ENCODE measurements at regions of chr20 and their contacts with region 1.

Region 1: DNA sequence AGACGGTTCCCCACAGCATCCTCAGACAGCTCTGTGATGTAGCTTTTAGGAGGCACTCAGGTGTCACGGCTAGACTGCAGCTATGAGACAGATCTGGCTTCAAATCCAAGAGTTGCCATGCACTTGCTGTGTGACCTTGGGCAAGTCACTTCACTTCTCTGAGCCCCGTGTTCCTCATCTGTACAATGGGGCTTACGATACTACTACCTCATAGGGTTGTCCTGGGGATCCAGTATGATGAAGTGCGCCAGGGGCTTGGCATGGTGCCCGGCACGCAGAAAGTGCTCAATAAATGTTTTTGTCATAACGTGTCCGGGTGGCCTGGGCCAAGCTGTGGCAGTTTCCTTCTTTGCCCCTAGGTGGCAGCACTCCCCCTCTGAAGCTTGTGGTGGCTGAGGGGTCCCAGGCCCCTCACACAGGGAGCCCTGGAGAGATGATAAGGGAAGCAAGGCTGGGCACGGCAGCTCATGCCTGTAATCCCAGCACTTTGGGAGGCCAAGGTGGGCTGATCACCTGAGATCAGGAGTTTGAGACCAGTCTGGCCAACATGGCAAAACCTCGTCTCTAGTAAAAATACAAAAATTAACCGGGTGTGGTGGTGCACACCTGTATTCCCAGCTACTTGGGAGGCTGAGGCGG is 19.1 kb upstream of the CHMP4B start:
- DNase-seq: peak; percentile 59 to 77 (median 74)
- ATAC-seq: peak; percentile 83
- H3K4me3 ChIP-seq: no peak overlapping the region
- H3K27ac ChIP-seq: no peak overlapping the region
- H3K4me1 ChIP-seq: peaks cover 8 to 19% of the 10 kb centered on the region in 2 experiments; a peak in 4 of 5 replicates
- H3K27me3 ChIP-seq: no peaks in the 10 kb centered on the region
- CTCF ChIP-seq: peak; percentile 72 to 86 (median 78)
- EP300 ChIP-seq: no peak
- POLR2A ChIP-seq: no peak
- RAD21 ChIP-seq: peak in 1 of 2 experiments; percentile 83

Region 2: GRCh38 chr20:33770005-33770404 is 22.1 kb before region 1 on chr20:
- CTCF ChIA-PET with region 1: no interaction called
- POLR2A ChIA-PET with region 1: no interaction called
- in situ Hi-C with region 1: no loop called
- intact Hi-C with region 1: no loop called
- DNase-seq: no peak
- ATAC-seq: 0 out of 3 replicates have a peak, but pooled peaks have one; percentile 38
- H3K4me3 ChIP-seq: no peak overlapping the region
- H3K27ac ChIP-seq: no peak overlapping the region
- H3K4me1 ChIP-seq: peaks cover 8 to 10% of the 10 kb centered on the region in 2 experiments; a peak in 4 of 5 replicates
- H3K27me3 ChIP-seq: no peaks in the 10 kb centered on the region
- CTCF ChIP-seq: peak in 1 of 3 experiments; percentile 11; a peak in 1 of 6 replicates
- EP300 ChIP-seq: no peak
- POLR2A ChIP-seq: no peak
- RAD21 ChIP-seq: no peak

Region 3: DNA sequence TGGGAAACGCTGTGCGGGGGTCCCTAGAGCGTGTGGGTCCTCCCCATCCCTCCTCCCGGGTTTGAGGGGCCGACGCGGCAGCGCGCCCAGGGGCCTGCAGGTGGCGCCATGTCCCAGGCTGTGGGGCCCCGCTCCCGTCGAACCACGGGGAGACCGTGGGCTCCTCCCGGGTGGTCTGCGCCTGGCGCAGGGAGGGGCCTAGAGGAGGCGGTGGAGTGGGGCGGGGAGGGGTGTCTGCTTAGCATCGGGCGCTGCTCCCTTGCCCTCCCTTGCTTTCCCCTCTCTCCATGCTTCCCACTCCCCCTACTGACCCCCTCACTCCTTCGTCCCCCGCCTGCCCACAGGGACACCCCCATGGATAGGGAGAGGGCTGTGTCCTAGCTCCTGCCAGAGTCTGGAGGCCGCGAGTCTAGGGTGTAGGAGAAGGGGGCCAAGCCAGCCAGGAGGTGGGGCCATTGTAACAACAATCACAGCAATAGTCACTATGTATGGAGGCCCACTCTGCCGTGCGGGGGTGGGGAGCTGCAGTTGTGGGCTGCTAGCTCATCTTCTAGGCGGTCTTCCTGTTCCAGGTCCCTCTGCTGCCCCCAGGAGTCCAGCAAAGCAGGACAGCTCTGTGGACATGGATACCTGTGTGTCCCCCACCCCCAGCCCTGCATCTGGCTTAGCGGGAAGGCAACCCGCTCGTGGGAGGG is 70.8 kb after region 1 on chr20:
- CTCF ChIA-PET with region 1: no interaction called
- POLR2A ChIA-PET with region 1: no interaction called
- in situ Hi-C with region 1: no loop called
- intact Hi-C with region 1: loop called (anchors 5 kb)
- DNase-seq: peak; percentile 62 to 88 (median 84)
- ATAC-seq: peak; percentile 87
- H3K4me3 ChIP-seq: peak overlapping the region; percentile 23; the same call in 1 of the 2 replicates
- H3K27ac ChIP-seq: no peak overlapping the region
- H3K4me1 ChIP-seq: peaks cover 0 to 13% of the 10 kb centered on the region in 2 experiments; a peak in 3 of 5 replicates
- H3K27me3 ChIP-seq: peaks cover 11 to 34% of the 10 kb centered on the region in 2 experiments; a peak in 4 of 5 replicates
- CTCF ChIP-seq: peak; percentile 73 to 82 (median 79)
- EP300 ChIP-seq: no peak
- POLR2A ChIP-seq: no peak
- RAD21 ChIP-seq: peak; percentile 43 to 69; a peak in 3 of 4 replicates

Region 4: GRCh38 chr20:33925867-33926266 is 133.8 kb after region 1 on chr20:
- CTCF ChIA-PET with region 1: no interaction called
- POLR2A ChIA-PET with region 1: interaction called, 3 read pairs
- in situ Hi-C with region 1: no loop called
- intact Hi-C with region 1: loop called (anchors 10 kb)
- DNase-seq: no peak
- ATAC-seq: no peak
- H3K4me3 ChIP-seq: no peak overlapping the region
- H3K27ac ChIP-seq: no peak overlapping the region
- H3K4me1 ChIP-seq: no peaks in the 10 kb centered on the region; a peak in 1 of 5 replicates
- H3K27me3 ChIP-seq: peaks cover 41 to 47% of the 10 kb centered on the region in 2 experiments
- CTCF ChIP-seq: no peak
- EP300 ChIP-seq: no peak
- POLR2A ChIP-seq: no peak
- RAD21 ChIP-seq: no peak

Measured in K562 (cell line).